SK-N-SH (cell line): ENCODE measurements at regions of chr6 and their contacts with region 1.

Region 1: DNA sequence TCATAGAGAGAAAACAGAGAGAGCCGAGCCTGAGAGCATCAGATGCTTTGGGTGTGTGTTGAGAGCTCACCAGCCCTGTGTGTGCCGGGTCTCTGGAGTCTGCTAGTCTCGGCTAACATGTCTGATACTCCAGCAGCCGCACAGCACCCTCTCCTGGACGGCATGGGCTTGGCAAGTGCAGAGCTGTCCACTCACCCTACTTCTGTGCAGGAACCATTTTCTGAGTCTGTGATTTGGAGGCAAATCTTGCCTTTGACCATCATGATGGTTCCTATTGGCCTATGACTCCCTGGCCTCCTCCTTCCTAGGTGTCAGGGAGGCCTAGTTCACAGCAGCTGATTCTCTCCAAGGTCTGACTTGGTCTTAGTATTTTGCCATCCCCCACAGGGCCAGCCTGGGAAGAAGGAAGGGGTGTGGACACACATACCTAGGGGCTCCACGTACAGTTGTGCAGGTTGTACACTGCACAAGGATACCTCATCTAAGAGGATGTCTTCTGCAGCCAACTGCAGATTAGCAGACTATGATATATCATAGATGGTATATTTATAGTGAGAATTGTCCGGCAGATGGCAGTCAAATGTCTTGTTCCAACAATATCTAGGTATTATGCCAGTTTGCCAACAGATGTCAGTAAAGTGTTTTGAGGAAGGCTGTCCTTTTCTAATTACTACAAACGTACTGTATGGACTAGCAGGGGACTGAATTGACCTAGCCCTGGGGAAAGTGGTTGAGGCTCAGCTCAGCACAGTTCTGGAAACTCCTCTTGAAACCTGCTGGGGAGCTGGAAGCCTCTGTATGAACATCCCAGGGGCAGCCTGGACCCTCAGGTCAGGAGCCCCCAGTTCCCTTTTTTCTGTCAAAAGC is 13.0 kb downstream of the FGD2 start:
- DNase-seq: peak; percentile 89
- H3K4me3 ChIP-seq: no peak overlapping the region; a peak in 1 of 4 replicates
- H3K27ac ChIP-seq: peak overlapping the region in 1 of 2 experiments; percentile 59; a peak in 3 of 4 replicates
- H3K4me1 ChIP-seq: peaks cover 0 to 19% of the 10 kb centered on the region in 2 experiments; a peak in 1 of 4 replicates
- H3K27me3 ChIP-seq: no peaks in the 10 kb centered on the region
- CTCF ChIP-seq: peak; percentile 92
- EP300 ChIP-seq: peak in 1 of 2 experiments; percentile 11; a peak in 1 of 4 replicates
- RAD21 ChIP-seq: peak; percentile 94

Region 2: DNA sequence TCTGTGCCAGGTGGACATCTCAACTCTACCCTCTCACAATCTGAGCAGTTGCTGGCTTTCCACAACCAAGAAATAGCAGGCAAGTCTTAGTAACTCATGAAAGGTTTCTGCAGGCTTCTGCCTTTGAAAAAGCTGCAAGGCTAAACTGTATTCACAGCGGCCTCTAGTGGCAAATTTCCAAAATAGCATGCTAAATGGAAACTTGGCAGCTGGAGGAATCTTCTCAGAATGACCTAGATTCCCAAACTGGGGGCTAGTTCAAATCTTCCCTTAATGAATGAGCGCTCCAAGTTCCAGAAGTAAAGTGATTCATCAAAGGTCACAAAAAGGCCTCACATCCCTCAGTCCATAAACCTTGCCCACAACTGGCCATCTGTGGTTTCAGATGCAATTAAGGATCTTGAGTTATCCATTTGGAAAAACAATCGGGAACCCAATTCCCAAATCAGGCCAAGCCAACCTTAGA is 167.2 kb before region 1 on chr6:
- CTCF ChIA-PET with region 1: interaction called, 17 read pairs
- POLR2A ChIA-PET with region 1: interaction called, 3 read pairs
- DNase-seq: peak; percentile 61
- H3K4me3 ChIP-seq: no peak overlapping the region; a peak in 1 of 4 replicates
- H3K27ac ChIP-seq: no peak overlapping the region
- H3K4me1 ChIP-seq: peaks cover 10 to 13% of the 10 kb centered on the region in 2 experiments; a peak in 2 of 4 replicates
- H3K27me3 ChIP-seq: no peaks in the 10 kb centered on the region
- CTCF ChIP-seq: peak; percentile 75
- EP300 ChIP-seq: no peak
- RAD21 ChIP-seq: peak; percentile 83

Region 3: GRCh38 chr6:36904114-36904513 is 114.3 kb before region 1 on chr6:
- CTCF ChIA-PET with region 1: interaction called, 12 read pairs
- POLR2A ChIA-PET with region 1: no interaction called
- DNase-seq: no peak
- H3K4me3 ChIP-seq: no peak overlapping the region
- H3K27ac ChIP-seq: no peak overlapping the region
- H3K4me1 ChIP-seq: no peaks in the 10 kb centered on the region; a peak in 1 of 4 replicates
- H3K27me3 ChIP-seq: no peaks in the 10 kb centered on the region
- CTCF ChIP-seq: no peak
- EP300 ChIP-seq: no peak
- RAD21 ChIP-seq: no peak

Region 4: DNA sequence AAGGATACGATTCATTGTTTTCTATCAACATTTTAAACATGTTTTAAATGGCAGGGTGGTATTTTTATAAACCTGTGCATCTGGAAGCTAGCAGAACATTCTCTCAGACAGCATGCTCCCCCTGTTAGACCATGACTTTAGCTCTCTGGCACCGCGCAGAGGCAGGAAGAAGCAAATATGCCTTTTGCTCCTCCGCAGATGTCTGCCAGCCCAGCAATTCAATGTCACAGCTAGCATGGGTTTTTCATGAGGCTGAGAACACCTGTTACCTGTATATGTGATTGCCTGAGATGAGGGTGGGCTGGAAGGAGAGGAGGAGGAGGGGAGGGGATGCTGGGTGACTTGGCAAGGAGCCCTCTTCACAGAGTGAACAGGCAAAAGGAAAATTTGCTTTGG is 39.1 kb before region 1 on chr6:
- CTCF ChIA-PET with region 1: interaction called, 54 read pairs
- POLR2A ChIA-PET with region 1: no interaction called
- DNase-seq: peak; percentile 63
- H3K4me3 ChIP-seq: no peak overlapping the region
- H3K27ac ChIP-seq: no peak overlapping the region; a peak in 1 of 4 replicates
- H3K4me1 ChIP-seq: peaks cover 3 to 13% of the 10 kb centered on the region in 2 experiments; a peak in 1 of 4 replicates
- H3K27me3 ChIP-seq: no peaks in the 10 kb centered on the region
- CTCF ChIP-seq: peak; percentile 35
- EP300 ChIP-seq: no peak
- RAD21 ChIP-seq: peak; percentile 66

Region 5: GRCh38 chr6:37051138-37052026 is 33.0 kb after region 1 on chr6:
- CTCF ChIA-PET with region 1: interaction called, 678 read pairs
- POLR2A ChIA-PET with region 1: no interaction called
- DNase-seq: peak; percentile 93
- H3K4me3 ChIP-seq: no peak overlapping the region; a peak in 1 of 4 replicates
- H3K27ac ChIP-seq: no peak overlapping the region
- H3K4me1 ChIP-seq: peaks cover 0 to 14% of the 10 kb centered on the region in 2 experiments; a peak in 1 of 4 replicates
- H3K27me3 ChIP-seq: no peaks in the 10 kb centered on the region
- CTCF ChIP-seq: peak; percentile 85
- EP300 ChIP-seq: no peak
- RAD21 ChIP-seq: peak; percentile 98

Region 6: DNA sequence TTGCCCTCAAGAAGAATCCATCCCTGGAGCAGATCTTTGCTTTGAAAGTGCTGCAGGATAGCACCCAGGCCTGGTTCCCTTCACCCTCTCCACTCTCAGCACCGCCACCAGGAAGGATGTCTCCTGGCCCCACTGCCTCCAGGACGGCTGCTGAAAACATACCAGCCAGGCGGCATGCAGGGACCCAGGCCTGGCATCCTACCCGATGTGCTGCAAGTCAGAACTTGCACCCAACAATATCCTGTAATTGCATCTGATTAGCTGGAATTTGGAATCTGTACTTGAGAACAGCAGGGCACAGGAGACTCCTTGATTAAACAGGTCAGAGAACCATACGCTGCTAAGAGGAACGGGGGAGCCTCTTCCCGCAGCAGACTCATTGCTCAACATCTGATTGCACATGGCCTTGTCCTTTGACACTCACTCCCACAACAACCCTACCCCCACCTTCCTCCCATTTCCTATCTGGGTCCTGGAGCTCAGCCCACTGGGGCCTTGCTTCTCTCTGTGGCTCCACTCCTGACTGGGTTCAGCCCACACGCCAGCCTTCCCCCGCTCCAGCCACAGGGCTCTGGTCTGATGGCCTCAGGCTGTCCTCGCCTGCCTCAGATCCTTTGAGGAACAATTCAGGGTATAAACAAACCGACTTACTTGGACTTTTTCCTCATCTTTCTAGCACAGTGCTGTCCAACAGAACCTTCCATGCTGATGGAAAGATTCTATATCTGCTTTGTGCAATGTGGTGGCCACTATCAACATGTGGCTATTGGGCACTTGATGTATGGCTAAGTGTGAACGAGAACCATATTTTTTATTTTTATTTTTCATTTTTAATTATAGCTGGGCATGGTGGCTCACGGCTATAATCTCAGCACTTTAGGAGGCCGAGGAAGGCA is 65.1 kb after region 1 on chr6:
- CTCF ChIA-PET with region 1: no interaction called
- POLR2A ChIA-PET with region 1: no interaction called
- DNase-seq: peak; percentile 51
- H3K4me3 ChIP-seq: no peak overlapping the region
- H3K27ac ChIP-seq: peak overlapping the region in 1 of 2 experiments; percentile 41; a peak in 1 of 4 replicates
- H3K4me1 ChIP-seq: peaks cover 0 to 8% of the 10 kb centered on the region in 2 experiments; a peak in 2 of 4 replicates
- H3K27me3 ChIP-seq: no peaks in the 10 kb centered on the region
- CTCF ChIP-seq: no peak
- EP300 ChIP-seq: no peak
- RAD21 ChIP-seq: no peak

Region 7: DNA sequence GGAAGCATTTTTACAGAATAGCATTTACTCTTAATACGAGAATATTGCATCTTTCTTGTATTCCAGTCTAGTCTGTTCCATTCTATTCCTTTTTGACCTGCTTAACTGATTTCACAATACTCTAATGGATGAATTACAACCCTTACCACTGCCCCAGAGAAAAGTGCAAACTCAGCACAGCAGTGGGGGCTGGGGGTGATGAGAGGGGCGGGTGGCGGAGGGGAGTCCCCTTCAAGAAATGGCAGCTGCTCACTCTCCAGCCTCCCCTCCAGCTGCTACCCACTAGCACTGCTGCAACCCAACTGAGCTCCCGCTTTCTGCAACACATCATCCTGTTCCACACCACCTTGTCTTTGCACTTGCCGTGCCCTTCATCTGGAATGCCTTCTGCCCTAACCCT is 181.7 kb after region 1 on chr6:
- CTCF ChIA-PET with region 1: interaction called, 431 read pairs
- POLR2A ChIA-PET with region 1: no interaction called
- DNase-seq: no peak
- H3K4me3 ChIP-seq: no peak overlapping the region
- H3K27ac ChIP-seq: no peak overlapping the region
- H3K4me1 ChIP-seq: no peaks in the 10 kb centered on the region
- H3K27me3 ChIP-seq: no peaks in the 10 kb centered on the region
- CTCF ChIP-seq: no peak
- EP300 ChIP-seq: no peak
- RAD21 ChIP-seq: no peak